ENCODE measurements at regions of chr5 and their contacts with region 1.

Region 1: GRCh38 chr5:134145779-134146581 is 30.8 kb downstream of the SKP1 start:
- DNase-seq: peak; percentile 83
- ATAC-seq: peak; percentile 85

Region 2: DNA sequence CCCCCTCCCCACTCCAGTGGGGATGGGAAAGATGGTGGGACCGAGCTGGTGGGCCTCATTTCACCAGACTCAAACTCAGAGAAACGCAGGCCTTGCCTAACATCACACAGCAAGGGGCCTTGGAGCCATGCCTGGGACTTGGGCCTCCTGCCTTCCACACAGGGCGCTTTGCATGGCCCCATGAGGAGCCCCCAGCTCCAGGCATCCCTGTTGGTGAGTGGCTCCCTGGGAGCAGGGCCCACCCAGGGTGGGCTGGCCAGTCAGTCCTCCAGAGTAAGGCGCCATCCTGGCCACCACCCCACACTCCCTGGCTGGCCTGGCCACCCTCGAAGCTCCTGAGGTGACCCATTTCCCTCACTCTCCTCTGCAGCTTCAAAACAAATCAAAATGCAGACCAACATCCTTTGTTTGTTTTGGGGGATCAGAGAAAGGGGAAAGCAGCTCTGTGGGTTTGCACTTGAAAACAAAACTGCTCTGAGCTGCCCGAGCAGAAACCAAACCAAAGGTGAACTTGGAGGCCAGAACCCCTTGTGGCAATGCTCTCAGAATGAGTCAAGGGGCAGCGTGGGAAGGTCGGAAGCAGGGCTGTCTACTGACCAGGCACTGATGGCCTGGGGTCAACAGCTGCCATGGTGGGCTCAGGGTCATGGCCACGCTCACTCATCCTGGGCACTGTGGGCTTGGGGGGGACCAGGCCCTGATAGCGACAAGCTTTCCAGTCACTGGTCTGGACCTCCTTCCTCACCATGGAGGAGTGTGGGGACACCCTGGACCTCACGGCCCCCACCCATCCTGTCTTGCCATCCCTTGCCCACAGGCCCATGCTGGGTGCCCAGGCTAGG is 104.2 kb before region 1 on chr5:
- intact Hi-C with region 1: loop called (anchors 5 kb)
- DNase-seq: no peak
- ATAC-seq: no peak

Region 3: GRCh38 chr5:134345996-134346395 is 200.0 kb after region 1 on chr5:
- intact Hi-C with region 1: no loop called
- DNase-seq: no peak
- ATAC-seq: no peak

Measured in left ventricle myocardium superior (tissue), 1 donor.